ENCODE measurements at regions of chr6 and their contacts with region 1.

Region 1: GRCh38 chr6:31559958-31560696 is 12.0 kb upstream of the LTA start:
- DNase-seq: peak; percentile 88
- ATAC-seq: peak; percentile 77
- H3K4me3 ChIP-seq: peak overlapping the region; percentile 55; the same call in 1 of the 2 replicates
- H3K27ac ChIP-seq: peak overlapping the region; percentile 99
- H3K4me1 ChIP-seq: peaks cover 79% of the 10 kb centered on the region
- H3K27me3 ChIP-seq: no peaks in the 10 kb centered on the region
- CTCF ChIP-seq: 0 out of 6 replicates have a peak, but pooled peaks of 1 of the 3 experiments have one; percentile 2
- EP300 ChIP-seq: 0 out of 4 replicates have a peak, but pooled peaks of 1 of the 2 experiments have one; percentile 42
- POLR2A ChIP-seq: no peak; the same call in 1 of the 2 replicates
- RAD21 ChIP-seq: peak; percentile 1; the same call in 1 of the 2 replicates

Region 2: DNA sequence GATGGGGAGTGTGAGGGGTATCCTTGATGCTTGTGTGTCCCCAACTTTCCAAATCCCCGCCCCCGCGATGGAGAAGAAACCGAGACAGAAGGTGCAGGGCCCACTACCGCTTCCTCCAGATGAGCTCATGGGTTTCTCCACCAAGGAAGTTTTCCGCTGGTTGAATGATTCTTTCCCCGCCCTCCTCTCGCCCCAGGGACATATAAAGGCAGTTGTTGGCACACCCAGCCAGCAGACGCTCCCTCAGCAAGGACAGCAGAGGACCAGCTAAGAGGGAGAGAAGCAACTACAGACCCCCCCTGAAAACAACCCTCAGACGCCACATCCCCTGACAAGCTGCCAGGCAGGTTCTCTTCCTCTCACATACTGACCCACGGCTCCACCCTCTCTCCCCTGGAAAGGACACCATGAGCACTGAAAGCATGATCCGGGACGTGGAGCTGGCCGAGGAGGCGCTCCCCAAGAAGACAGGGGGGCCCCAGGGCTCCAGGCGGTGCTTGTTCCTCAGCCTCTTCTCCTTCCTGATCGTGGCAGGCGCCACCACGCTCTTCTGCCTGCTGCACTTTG is 15.3 kb after region 1 on chr6 and contains the start of gene TNF:
- CTCF ChIA-PET with region 1: interaction called, 2,098 read pairs
- POLR2A ChIA-PET with region 1: interaction called, 255 read pairs
- RAD21 ChIA-PET with region 1: interaction called, 620 read pairs
- SMC1A ChIA-PET with region 1: interaction called, 1,989 read pairs
- in situ Hi-C with region 1: no loop called
- intact Hi-C with region 1: loop called (anchors 1 kb)
- DNase-seq: peak; percentile 91
- ATAC-seq: peak; percentile 44
- H3K4me3 ChIP-seq: peak within 1 kb of the TSS; percentile 91
- H3K27ac ChIP-seq: peak within 1 kb of the TSS; percentile 96
- H3K4me1 ChIP-seq: peaks cover 57% of the 10 kb centered on the region
- H3K27me3 ChIP-seq: no peaks in the 10 kb centered on the region
- CTCF ChIP-seq: no peak
- EP300 ChIP-seq: no peak
- POLR2A ChIP-seq: peak; percentile 99
- RAD21 ChIP-seq: 0 out of 2 replicates have a peak, but pooled peaks have one; percentile 12
- polyA plus RNA-seq, gene TNF: 18.0 to 30.2 TPM

Region 3: DNA sequence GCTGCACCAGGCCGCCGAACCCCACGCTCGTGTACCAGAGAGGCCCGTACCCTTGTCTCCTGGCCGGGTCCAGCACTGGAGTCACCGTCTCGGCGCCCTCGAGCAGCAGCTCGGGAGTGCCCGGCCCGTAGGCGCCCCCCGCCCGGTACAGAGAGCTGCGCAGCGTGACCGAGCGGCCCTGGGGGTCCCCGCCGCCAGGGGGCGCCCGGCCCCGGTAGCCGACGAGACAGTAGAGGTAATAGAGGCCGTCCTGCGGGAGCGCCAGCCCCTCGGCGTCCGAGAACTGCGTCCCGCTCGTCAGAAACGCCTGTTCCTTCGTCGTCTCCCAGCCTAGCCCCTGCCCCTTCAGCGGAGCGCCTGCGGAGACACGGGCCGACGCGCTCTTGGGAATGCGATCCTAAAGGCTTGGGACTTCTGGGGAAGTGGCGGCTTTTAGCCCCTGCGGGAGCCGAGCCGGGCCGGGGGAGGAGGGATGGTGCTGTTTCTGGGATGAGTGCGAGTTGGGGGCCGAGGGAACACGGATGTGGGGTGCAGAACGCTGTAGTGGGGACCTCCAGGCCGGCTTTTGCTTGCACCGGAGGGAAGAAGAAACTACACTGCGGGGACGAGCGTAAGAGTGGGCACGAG is 20.8 kb after region 1 on chr6:
- CTCF ChIA-PET with region 1: interaction called, 2,098 read pairs
- POLR2A ChIA-PET with region 1: interaction called, 255 read pairs
- RAD21 ChIA-PET with region 1: interaction called, 620 read pairs
- SMC1A ChIA-PET with region 1: interaction called, 1,989 read pairs
- in situ Hi-C with region 1: no loop called
- intact Hi-C with region 1: loop called (anchors 1 kb)
- DNase-seq: no peak
- ATAC-seq: peak; percentile 83
- H3K4me3 ChIP-seq: peak overlapping the region; percentile 93
- H3K27ac ChIP-seq: peak overlapping the region; percentile 91
- H3K4me1 ChIP-seq: peaks cover 41% of the 10 kb centered on the region
- H3K27me3 ChIP-seq: no peaks in the 10 kb centered on the region
- CTCF ChIP-seq: peak; percentile 96 to 97 (median 97)
- EP300 ChIP-seq: no peak
- POLR2A ChIP-seq: peak; percentile 87
- RAD21 ChIP-seq: peak; percentile 67

Region 4: GRCh38 chr6:31588871-31589650 is 28.9 kb after region 1 on chr6:
- CTCF ChIA-PET with region 1: interaction called, 2,098 read pairs
- POLR2A ChIA-PET with region 1: interaction called, 255 read pairs
- RAD21 ChIA-PET with region 1: interaction called, 620 read pairs
- SMC1A ChIA-PET with region 1: interaction called, 1,989 read pairs
- in situ Hi-C with region 1: no loop called
- intact Hi-C with region 1: no loop called
- DNase-seq: no peak
- ATAC-seq: no peak
- H3K4me3 ChIP-seq: no peak overlapping the region
- H3K27ac ChIP-seq: no peak overlapping the region; the same call in 1 of the 2 replicates
- H3K4me1 ChIP-seq: peaks cover 55% of the 10 kb centered on the region
- H3K27me3 ChIP-seq: no peaks in the 10 kb centered on the region
- CTCF ChIP-seq: no peak
- EP300 ChIP-seq: no peak
- POLR2A ChIP-seq: no peak
- RAD21 ChIP-seq: no peak

Region 5: GRCh38 chr6:32609731-32610640 is 1049.9 kb after region 1 on chr6:
- CTCF ChIA-PET with region 1: no interaction called
- POLR2A ChIA-PET with region 1: no interaction called
- RAD21 ChIA-PET with region 1: no interaction called
- SMC1A ChIA-PET with region 1: no interaction called
- in situ Hi-C with region 1: loop called (anchors 25 kb)
- intact Hi-C with region 1: no loop called
- DNase-seq: peak; percentile 100
- ATAC-seq: peak; percentile 84
- H3K4me3 ChIP-seq: peak overlapping the region; percentile 3; the same call in 1 of the 2 replicates
- H3K27ac ChIP-seq: peak overlapping the region; percentile 95
- H3K4me1 ChIP-seq: peaks cover 17% of the 10 kb centered on the region
- H3K27me3 ChIP-seq: no peaks in the 10 kb centered on the region
- CTCF ChIP-seq: no peak
- EP300 ChIP-seq: peak; percentile 30 to 68; a peak in 2 of 4 replicates
- POLR2A ChIP-seq: peak; percentile 59; the same call in 1 of the 2 replicates
- RAD21 ChIP-seq: no peak

Measured in GM12878 (cell line).